ENCODE measurements at regions of chr15 and their contacts with region 1.

Region 1: DNA sequence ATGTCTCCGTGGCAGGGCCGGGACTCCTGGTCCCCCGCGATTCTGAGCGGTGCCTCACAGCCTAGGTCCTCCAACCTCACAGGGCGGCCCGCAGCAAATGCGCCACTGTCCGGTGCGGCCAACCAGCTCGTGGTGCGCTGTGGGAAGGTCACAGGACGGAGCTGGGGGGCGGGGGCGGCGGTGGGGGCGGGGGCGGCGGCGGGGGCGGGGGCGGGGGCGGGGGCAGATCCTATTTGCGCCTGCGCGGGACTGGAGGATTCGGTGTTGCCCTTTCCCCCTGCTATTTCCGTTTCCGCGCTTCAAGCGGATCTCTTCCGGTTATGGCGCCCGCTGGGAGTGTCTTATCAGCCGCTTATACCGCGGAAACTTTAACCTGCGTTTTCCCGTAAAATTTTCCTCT is 106.7 kb upstream of the SNRPN start:
- DNase-seq: no peak
- H3K4me3 ChIP-seq: no peak overlapping the region
- H3K27ac ChIP-seq: no peak overlapping the region
- H3K4me1 ChIP-seq: no peaks in the 10 kb centered on the region
- CTCF ChIP-seq: no peak

Region 2: GRCh38 chr15:23642413-23643044 is 1205.5 kb before region 1 on chr15:
- CTCF ChIA-PET with region 1: no interaction called
- POLR2A ChIA-PET with region 1: no interaction called
- intact Hi-C with region 1: loop called (anchors 10 kb)
- DNase-seq: peak; percentile 56
- H3K4me3 ChIP-seq: no peak overlapping the region
- H3K27ac ChIP-seq: no peak overlapping the region
- H3K4me1 ChIP-seq: no peaks in the 10 kb centered on the region
- CTCF ChIP-seq: peak; percentile 91

Region 3: GRCh38 chr15:24858737-24859601 is 10.9 kb after region 1 on chr15:
- CTCF ChIA-PET with region 1: no interaction called
- POLR2A ChIA-PET with region 1: no interaction called
- intact Hi-C with region 1: no loop called
- DNase-seq: no peak
- H3K4me3 ChIP-seq: no peak overlapping the region
- H3K27ac ChIP-seq: no peak overlapping the region
- H3K4me1 ChIP-seq: no peaks in the 10 kb centered on the region
- CTCF ChIP-seq: no peak

Region 4: DNA sequence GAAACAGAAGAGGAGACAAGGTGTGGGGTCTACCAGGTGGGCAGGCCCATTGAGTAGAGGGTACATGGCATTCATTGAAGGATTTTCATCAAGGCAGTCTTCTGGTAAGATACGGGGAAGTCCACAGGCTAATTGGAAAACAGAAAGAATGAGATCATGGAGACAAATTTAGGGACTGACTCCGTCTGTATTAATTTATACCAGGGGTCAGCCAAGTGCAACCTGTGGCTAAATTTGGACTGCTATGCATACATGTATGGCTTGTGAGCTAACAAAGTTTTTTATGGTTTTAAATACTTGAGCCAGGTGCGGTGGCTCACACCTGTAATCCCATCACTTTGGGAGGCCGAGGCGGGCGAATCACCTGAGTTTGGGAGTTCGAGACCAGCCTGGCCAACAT is 85.7 kb after region 1 on chr15:
- CTCF ChIA-PET with region 1: no interaction called
- POLR2A ChIA-PET with region 1: no interaction called
- intact Hi-C with region 1: no loop called
- DNase-seq: no peak
- H3K4me3 ChIP-seq: no peak overlapping the region
- H3K27ac ChIP-seq: no peak overlapping the region
- H3K4me1 ChIP-seq: no peaks in the 10 kb centered on the region
- CTCF ChIP-seq: no peak